ENCODE measurements at regions of chr2 and their contacts with region 1.

Region 1: DNA sequence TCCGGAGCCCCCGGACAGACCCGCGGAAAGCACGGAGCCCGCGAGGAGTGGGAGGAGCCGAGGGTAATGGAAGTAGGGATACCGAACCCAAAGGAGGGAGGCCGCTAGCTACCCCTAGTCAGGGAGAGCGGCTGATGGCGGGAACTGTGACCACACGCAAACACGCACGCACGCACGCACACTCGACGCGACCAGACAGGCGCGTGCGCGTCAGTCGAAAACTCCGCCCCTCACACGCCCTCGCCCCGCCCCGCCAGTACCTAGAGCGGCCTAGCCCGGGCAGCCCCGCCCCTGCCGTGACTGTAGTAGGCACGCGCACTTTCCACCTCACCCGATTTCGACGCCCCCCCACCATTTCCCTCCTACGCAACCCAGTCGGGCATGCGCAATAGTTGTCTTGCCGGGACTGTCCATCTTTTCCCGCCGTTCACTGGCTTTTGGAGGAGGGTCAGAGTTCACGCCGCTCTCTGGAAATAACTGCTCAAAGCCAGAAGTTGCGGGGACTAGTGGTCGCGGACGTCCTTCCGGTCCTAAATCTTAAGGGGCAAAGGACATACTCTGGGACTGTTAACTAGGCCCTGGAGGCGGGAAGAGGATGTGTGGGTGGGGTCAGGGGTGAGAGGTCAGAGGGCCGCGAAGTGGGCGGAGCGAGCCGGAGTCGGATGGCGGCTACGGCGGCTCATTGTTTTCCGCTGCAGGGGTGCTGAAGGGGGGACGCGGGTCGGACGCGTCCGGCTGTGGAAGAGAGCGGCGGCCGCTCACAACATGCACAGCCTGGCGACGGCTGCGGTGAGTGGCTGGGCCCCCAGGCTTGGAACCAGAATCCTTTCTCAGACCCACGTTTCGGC is at the starts of genes CNOT9 and USP37:
- DNase-seq: peak; percentile 99 to 100 (median 100)
- ATAC-seq: peak; percentile 85
- H3K4me3 ChIP-seq: peak within 1 kb of the TSS; percentile 77
- H3K4me3 Mint-ChIP-seq: peak within 1 kb of the TSS; percentile 96
- H3K27ac ChIP-seq: peak within 1 kb of the TSS; percentile 98 to 99
- H3K27ac Mint-ChIP-seq: peak within 1 kb of the TSS; percentile 97
- H3K4me1 ChIP-seq: peaks cover 32% of the 10 kb centered on the region
- H3K4me1 Mint-ChIP-seq: peaks cover 77% of the 10 kb centered on the region
- H3K27me3 ChIP-seq: no peaks in the 10 kb centered on the region
- H3K27me3 Mint-ChIP-seq: no peaks in the 10 kb centered on the region
- CTCF ChIP-seq: no peak
- total RNA-seq, gene CNOT9: 62.8 to 66.8 TPM
- total RNA-seq, gene USP37: 20.2 to 24.4 TPM

Region 2: GRCh38 chr2:216619411-216620393 is 1948.7 kb before region 1 on chr2:
- CTCF ChIA-PET with region 1: no interaction called
- POLR2A ChIA-PET with region 1: no interaction called
- intact Hi-C with region 1: no loop called
- DNase-seq: no peak
- ATAC-seq: no peak
- H3K4me3 ChIP-seq: no peak overlapping the region
- H3K4me3 Mint-ChIP-seq: no peak overlapping the region
- H3K27ac ChIP-seq: no peak overlapping the region
- H3K27ac Mint-ChIP-seq: no peak overlapping the region
- H3K4me1 ChIP-seq: no peaks in the 10 kb centered on the region
- H3K4me1 Mint-ChIP-seq: no peaks in the 10 kb centered on the region
- H3K27me3 ChIP-seq: no peaks in the 10 kb centered on the region
- H3K27me3 Mint-ChIP-seq: no peaks in the 10 kb centered on the region
- CTCF ChIP-seq: no peak

Region 3: GRCh38 chr2:218216674-218217359 is 351.6 kb before region 1 on chr2 and contains the start of gene ARPC2:
- CTCF ChIA-PET with region 1: no interaction called
- POLR2A ChIA-PET with region 1: no interaction called
- intact Hi-C with region 1: loop called in 1 of 2 experiments (anchors 2 kb)
- DNase-seq: peak; percentile 90 to 98 (median 93)
- ATAC-seq: peak; percentile 73
- H3K4me3 ChIP-seq: peak within 1 kb of the TSS; percentile 80
- H3K4me3 Mint-ChIP-seq: peak within 1 kb of the TSS; percentile 95
- H3K27ac ChIP-seq: peak within 1 kb of the TSS; percentile 96 to 99
- H3K27ac Mint-ChIP-seq: peak within 1 kb of the TSS; percentile 96
- H3K4me1 ChIP-seq: peaks cover 36% of the 10 kb centered on the region
- H3K4me1 Mint-ChIP-seq: peaks cover 45% of the 10 kb centered on the region
- H3K27me3 ChIP-seq: no peaks in the 10 kb centered on the region
- H3K27me3 Mint-ChIP-seq: no peaks in the 10 kb centered on the region
- CTCF ChIP-seq: no peak
- total RNA-seq, gene ARPC2: 448 to 452 TPM

Region 4: DNA sequence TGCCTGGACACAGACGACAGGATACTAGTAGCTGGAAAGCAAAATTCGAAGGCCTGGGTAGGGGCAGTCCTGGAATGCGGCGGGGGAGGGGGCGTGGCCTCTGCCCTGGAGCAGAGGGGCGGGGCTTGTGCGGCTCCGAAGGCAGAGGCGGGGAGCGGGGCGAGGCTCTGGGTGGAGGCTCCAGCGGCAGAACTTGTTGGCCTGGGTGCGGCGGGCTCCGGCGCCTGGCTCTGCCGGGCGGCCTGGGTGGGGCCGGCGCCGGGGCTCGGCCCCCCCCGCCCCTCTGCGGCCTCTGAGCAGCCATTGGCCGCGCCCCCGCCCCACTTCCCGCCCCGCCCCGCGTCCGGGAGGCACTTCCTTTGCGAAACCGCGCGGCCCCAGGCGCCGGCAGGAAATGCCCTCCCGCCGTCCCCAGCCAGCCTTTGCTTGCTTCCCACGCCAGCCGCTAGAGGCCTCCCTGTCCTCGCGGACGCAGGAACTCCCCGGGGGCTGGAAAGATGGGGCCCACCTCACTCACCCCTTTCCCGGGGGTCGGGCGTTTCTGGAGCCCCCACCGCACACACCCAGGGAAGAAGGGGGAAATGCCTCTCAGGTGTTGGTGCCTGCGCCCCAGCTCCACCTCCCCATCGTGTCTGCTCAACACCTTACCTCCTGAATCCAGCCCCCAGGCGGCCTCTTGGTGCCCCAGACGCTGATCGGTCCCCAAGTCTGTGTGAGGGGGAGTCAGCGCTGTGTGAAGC is 162.0 kb before region 1 on chr2:
- CTCF ChIA-PET with region 1: interaction called, 3 read pairs
- POLR2A ChIA-PET with region 1: interaction called, 4 read pairs
- intact Hi-C with region 1: loop called (anchors 1 to 2 kb)
- DNase-seq: peak; percentile 73 to 97 (median 94)
- ATAC-seq: peak; percentile 69
- H3K4me3 ChIP-seq: peak overlapping the region; percentile 59
- H3K4me3 Mint-ChIP-seq: peak overlapping the region; percentile 90
- H3K27ac ChIP-seq: peak overlapping the region; percentile 61 to 78
- H3K27ac Mint-ChIP-seq: peak overlapping the region; percentile 88
- H3K4me1 ChIP-seq: peaks cover 68% of the 10 kb centered on the region
- H3K4me1 Mint-ChIP-seq: peaks cover 57% of the 10 kb centered on the region
- H3K27me3 ChIP-seq: no peaks in the 10 kb centered on the region
- H3K27me3 Mint-ChIP-seq: no peaks in the 10 kb centered on the region
- CTCF ChIP-seq: peak; percentile 67

Region 5: GRCh38 chr2:218671654-218672566 is 103.5 kb after region 1 on chr2 and contains the starts of genes RNF25 and STK36:
- CTCF ChIA-PET with region 1: no interaction called
- POLR2A ChIA-PET with region 1: no interaction called
- intact Hi-C with region 1: loop called in 1 of 2 experiments (anchors 5 kb)
- DNase-seq: peak; percentile 69 to 92 (median 77)
- ATAC-seq: peak; percentile 93
- H3K4me3 ChIP-seq: peak within 1 kb of the TSS; percentile 81
- H3K4me3 Mint-ChIP-seq: peak within 1 kb of the TSS; percentile 98
- H3K27ac ChIP-seq: peak within 1 kb of the TSS; percentile 54 to 81
- H3K27ac Mint-ChIP-seq: peak within 1 kb of the TSS; percentile 96
- H3K4me1 ChIP-seq: peaks cover 17% of the 10 kb centered on the region
- H3K4me1 Mint-ChIP-seq: peaks cover 25% of the 10 kb centered on the region
- H3K27me3 ChIP-seq: no peaks in the 10 kb centered on the region
- H3K27me3 Mint-ChIP-seq: no peaks in the 10 kb centered on the region
- CTCF ChIP-seq: no peak
- total RNA-seq, gene RNF25: 18.0 to 18.6 TPM
- total RNA-seq, gene STK36: 9.8 to 12.7 TPM

Region 6: GRCh38 chr2:219253753-219254590 is 685.6 kb after region 1 on chr2 and contains the start of gene TUBA4A:
- CTCF ChIA-PET with region 1: no interaction called
- POLR2A ChIA-PET with region 1: interaction called, 3 read pairs
- intact Hi-C with region 1: loop called in 1 of 2 experiments (anchors 10 kb)
- DNase-seq: peak; percentile 83 to 95 (median 90)
- ATAC-seq: peak; percentile 71
- H3K4me3 ChIP-seq: peak within 1 kb of the TSS; percentile 88
- H3K4me3 Mint-ChIP-seq: peak within 1 kb of the TSS; percentile 88
- H3K27ac ChIP-seq: peak within 1 kb of the TSS; percentile 73 to 87
- H3K27ac Mint-ChIP-seq: peak within 1 kb of the TSS; percentile 96
- H3K4me1 ChIP-seq: peaks cover 49% of the 10 kb centered on the region
- H3K4me1 Mint-ChIP-seq: peaks cover 49% of the 10 kb centered on the region
- H3K27me3 ChIP-seq: no peaks in the 10 kb centered on the region
- H3K27me3 Mint-ChIP-seq: no peaks in the 10 kb centered on the region
- CTCF ChIP-seq: no peak
- total RNA-seq, gene TUBA4A: 183 to 185 TPM

Measured in CD4-positive, alpha-beta T cell (primary cell).